ENCODE measurements at regions of chr5 and their contacts with region 1.

Region 1: DNA sequence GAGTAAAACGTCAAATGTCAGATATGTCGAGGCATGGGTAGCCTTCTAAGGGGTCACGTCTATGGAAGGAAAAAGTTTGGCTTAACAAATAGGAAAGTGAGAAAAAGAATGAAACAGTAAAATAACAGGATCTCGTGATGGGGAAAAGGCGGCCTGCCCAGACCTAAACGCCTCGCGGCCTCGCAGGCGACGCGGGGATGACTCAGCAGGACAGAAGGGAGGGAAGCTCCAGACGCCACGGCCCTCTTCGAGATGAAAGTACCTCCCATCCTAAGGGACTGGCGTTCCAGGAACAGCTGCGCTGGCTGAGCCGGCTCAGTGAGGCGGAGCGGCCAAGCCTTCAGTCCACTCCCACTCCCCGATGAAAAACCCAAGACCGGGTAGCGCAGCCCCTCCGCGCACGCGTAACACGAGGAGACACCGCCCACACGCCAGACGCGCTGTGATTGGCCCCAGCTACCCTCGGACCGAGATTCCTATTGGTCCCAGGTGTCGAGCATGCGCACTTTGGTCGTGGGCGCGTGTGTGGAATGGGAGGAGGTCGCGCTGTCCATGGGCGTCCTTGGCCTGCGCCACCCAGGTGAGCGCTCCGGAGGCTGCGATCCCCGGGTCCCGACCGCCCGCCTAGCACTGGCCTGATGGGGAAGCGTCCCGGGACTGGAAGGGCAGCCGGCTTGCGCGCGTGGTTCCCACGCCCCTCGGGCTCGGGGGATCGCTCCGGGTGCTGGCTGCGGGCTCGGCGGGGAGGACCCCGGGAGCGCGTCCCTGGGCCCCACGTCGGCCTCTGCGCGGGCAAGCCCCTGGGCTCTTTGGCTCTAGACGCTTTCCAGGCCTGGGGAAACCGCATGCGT is 588.5 kb downstream of the MTRR start:
- DNase-seq: peak; percentile 95
- H3K4me3 Mint-ChIP-seq: peak overlapping the region; percentile 89
- H3K27ac Mint-ChIP-seq: peak overlapping the region; percentile 95
- H3K4me1 Mint-ChIP-seq: peaks cover 10% of the 10 kb centered on the region
- H3K27me3 Mint-ChIP-seq: no peaks in the 10 kb centered on the region
- CTCF ChIP-seq: no peak

Region 2: DNA sequence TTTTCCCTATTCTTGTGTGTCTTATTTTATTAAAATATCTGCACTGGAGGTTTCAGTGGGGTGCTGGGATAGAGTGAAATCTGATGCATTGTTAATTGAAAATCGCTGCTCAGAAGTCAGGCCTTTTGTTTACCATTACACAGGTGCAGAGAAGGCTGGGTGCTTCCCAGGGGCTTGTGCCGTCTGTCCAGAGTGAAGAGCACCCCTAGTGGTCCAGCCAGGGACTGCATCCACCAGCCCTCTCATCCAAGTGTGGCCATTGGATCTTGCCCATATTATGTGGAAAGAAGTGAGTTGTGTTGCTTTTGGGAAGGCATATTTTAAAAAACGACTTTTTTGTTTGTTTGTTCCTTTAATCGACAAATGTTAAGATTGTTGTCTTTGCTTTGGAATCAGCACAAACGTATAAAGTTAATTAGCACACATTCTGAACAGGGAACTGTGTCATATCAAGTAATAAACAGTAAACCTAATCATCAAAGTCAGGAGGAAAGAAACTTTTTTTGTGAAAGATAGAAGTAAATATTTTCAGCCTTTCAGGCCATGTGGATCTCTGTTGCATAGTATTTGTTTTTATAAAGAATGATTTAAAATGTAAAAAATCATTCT is 272.9 kb before region 1 on chr5:
- CTCF ChIA-PET with region 1: no interaction called
- intact Hi-C with region 1: no loop called
- DNase-seq: peak; percentile 49
- H3K4me3 Mint-ChIP-seq: no peak overlapping the region
- H3K27ac Mint-ChIP-seq: no peak overlapping the region
- H3K4me1 Mint-ChIP-seq: no peaks in the 10 kb centered on the region
- H3K27me3 Mint-ChIP-seq: no peaks in the 10 kb centered on the region
- CTCF ChIP-seq: peak; percentile 52

Region 3: DNA sequence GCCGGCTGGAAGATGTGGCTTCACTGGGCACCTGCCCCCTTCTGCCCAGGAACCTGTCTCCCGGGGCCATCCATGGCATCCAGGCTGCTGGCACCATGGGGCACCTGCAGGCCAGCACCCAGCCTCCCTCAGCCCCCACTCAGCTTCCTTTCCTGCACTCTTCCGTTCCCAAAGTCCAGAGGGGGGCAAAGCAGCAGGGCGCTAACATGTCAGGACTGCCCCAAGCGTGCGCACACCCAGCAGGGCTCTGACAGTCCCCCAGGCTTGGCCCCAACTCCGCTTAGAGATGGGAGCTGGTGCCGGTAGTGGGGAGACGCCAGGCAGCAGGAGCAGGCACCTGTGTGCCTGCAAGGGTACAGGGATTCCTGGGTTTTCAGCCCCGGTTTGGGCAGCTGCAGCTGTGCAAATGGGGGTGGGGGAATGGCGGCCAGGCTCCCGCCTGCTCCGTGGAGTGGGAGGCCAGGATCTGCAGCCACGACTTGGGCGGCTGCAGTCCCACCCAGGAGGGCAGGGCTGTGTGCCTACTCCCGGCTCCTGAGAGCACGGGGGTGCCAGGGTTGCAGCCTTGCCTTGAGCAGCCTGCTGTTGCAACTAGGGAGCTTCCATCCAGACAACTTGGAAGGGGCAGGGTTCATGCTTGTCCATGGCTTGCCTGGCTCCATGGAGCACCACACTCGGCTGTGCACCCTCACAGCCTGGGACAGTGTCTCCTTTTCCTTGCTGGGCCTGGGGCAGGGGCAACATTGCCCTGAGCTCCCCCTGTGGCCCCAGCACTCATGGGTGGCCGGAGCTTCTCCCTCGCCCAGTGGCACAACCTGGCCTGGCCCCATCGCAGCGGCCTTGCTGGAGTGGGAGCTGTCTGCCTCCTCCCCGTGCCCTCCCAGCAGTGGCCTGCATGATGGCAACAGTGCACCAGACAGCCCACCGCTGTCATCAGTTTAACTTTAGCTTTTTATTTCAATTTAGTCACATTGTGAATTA is 27.3 kb before region 1 on chr5:
- CTCF ChIA-PET with region 1: no interaction called
- intact Hi-C with region 1: loop called (anchors 1 kb)
- DNase-seq: no peak
- H3K4me3 Mint-ChIP-seq: no peak overlapping the region
- H3K27ac Mint-ChIP-seq: no peak overlapping the region
- H3K4me1 Mint-ChIP-seq: no peaks in the 10 kb centered on the region
- H3K27me3 Mint-ChIP-seq: no peaks in the 10 kb centered on the region
- CTCF ChIP-seq: no peak

Region 4: GRCh38 chr5:8560776-8561175 is 103.4 kb after region 1 on chr5:
- CTCF ChIA-PET with region 1: no interaction called
- intact Hi-C with region 1: no loop called
- DNase-seq: no peak
- H3K4me3 Mint-ChIP-seq: no peak overlapping the region
- H3K27ac Mint-ChIP-seq: no peak overlapping the region
- H3K4me1 Mint-ChIP-seq: no peaks in the 10 kb centered on the region
- H3K27me3 Mint-ChIP-seq: no peaks in the 10 kb centered on the region
- CTCF ChIP-seq: no peak

Measured in Calu3 (cell line).